Naive thymus-derived CD4-positive, alpha-beta T cell (primary cell): ENCODE measurements at regions of chr2 and their contacts with region 1.

Region 1: GRCh38 chr2:106542811-106543259 is 55.7 kb downstream of the CD8B2 start:
- DNase-seq: peak; percentile 43 to 77 (median 62)
- ATAC-seq: peak; percentile 95
- H3K4me3 ChIP-seq: no peak overlapping the region
- H3K4me3 Mint-ChIP-seq: peak overlapping the region; percentile 48 to 90 (median 80)
- H3K27ac ChIP-seq: no peak overlapping the region
- H3K27ac Mint-ChIP-seq: peak overlapping the region in 2 of 9 donors; percentile 67 to 80
- H3K4me1 ChIP-seq: no peaks in the 10 kb centered on the region
- H3K4me1 Mint-ChIP-seq: peaks cover 0 to 5% (median 4%) of the 10 kb centered on the region in 7 donors
- H3K27me3 ChIP-seq: no peaks in the 10 kb centered on the region
- H3K27me3 Mint-ChIP-seq: peaks cover 16 to 35% (median 19%) of the 10 kb centered on the region in 5 donors

Region 2: DNA sequence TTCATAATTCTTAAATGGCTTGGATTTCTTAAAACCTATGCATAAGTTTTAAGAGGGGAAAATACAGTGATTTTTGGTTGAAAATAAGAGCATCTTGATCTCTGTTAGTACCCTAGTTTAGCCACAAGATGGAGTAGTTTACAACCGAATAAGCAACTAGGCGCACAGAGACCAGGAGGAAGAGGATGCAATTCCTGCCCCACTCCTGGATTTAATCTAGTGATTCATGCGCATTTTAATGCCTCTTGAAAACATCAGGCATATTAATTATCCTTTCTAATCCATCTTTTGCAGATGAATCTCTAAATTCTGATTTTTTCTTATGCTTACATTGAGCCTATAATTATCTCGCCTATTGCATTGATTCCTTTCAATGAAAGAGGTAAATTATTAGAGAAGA is 1428.3 kb before region 1 on chr2:
- CTCF ChIA-PET with region 1: interaction called, 3 read pairs
- POLR2A ChIA-PET with region 1: no interaction called
- intact Hi-C with region 1: loop called in 1 of 2 experiments (anchors 2 kb)
- DNase-seq: peak in 6 of 9 donors; percentile 7 to 29 (median 14)
- ATAC-seq: peak; percentile 51
- H3K4me3 ChIP-seq: no peak overlapping the region
- H3K4me3 Mint-ChIP-seq: no peak overlapping the region
- H3K27ac ChIP-seq: no peak overlapping the region
- H3K27ac Mint-ChIP-seq: no peak overlapping the region
- H3K4me1 ChIP-seq: no peaks in the 10 kb centered on the region
- H3K4me1 Mint-ChIP-seq: peaks cover 0 to 1% (median 0%) of the 10 kb centered on the region in 7 donors
- H3K27me3 ChIP-seq: no peaks in the 10 kb centered on the region
- H3K27me3 Mint-ChIP-seq: no peaks in the 10 kb centered on the region

Region 3: DNA sequence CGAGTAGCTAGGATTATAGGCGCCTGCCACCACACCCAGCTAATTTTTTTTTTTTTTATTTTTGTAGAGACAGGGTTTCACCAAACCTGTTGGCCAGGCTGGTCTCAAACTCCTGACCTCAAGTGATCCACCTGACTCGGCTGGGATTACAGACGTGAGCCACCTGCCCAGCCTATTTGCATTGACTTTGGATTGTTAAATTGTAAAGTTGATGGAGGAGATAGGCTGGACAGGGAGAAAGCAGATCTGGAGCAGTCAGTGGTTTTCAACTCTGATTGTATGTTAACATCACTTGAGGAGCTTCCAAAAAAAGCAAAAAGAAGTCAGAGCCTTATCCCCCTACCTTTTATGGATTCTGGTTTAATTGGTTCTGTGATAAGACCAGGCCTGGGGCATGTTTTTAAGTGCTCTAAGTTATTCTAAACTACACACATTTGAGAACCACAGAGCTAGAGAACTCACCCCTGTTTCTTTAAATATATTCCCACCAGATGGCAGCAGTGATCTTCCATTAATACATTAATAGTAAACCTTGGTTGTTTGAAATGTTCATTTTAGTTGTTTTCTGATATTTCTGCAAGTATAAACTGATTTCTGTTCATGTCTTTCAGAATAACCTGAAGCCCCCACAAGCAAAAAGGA is 1198.0 kb before region 1 on chr2:
- CTCF ChIA-PET with region 1: no interaction called
- POLR2A ChIA-PET with region 1: no interaction called
- intact Hi-C with region 1: loop called in 1 of 2 experiments (anchors 1 kb)
- DNase-seq: peak in 5 of 9 donors; percentile 31 to 49 (median 43)
- ATAC-seq: peak; percentile 65
- H3K4me3 ChIP-seq: no peak overlapping the region
- H3K4me3 Mint-ChIP-seq: no peak overlapping the region
- H3K27ac ChIP-seq: no peak overlapping the region
- H3K27ac Mint-ChIP-seq: peak overlapping the region in 1 of 9 donors; percentile 50
- H3K4me1 ChIP-seq: no peaks in the 10 kb centered on the region
- H3K4me1 Mint-ChIP-seq: peaks cover 4 to 20% (median 9%) of the 10 kb centered on the region in 7 donors
- H3K27me3 ChIP-seq: no peaks in the 10 kb centered on the region
- H3K27me3 Mint-ChIP-seq: no peaks in the 10 kb centered on the region

Region 4: GRCh38 chr2:105431367-105432043 is 1111.3 kb before region 1 on chr2:
- CTCF ChIA-PET with region 1: no interaction called
- POLR2A ChIA-PET with region 1: no interaction called
- intact Hi-C with region 1: no loop called
- DNase-seq: no peak
- ATAC-seq: no peak
- H3K4me3 ChIP-seq: no peak overlapping the region
- H3K4me3 Mint-ChIP-seq: no peak overlapping the region
- H3K27ac ChIP-seq: no peak overlapping the region
- H3K27ac Mint-ChIP-seq: no peak overlapping the region
- H3K4me1 ChIP-seq: peaks cover 8 to 16% of the 10 kb centered on the region in 2 donors
- H3K4me1 Mint-ChIP-seq: peaks cover 11 to 23% (median 16%) of the 10 kb centered on the region in 7 donors
- H3K27me3 ChIP-seq: no peaks in the 10 kb centered on the region
- H3K27me3 Mint-ChIP-seq: peaks cover 0 to 20% (median 4%) of the 10 kb centered on the region in 5 donors

Region 5: GRCh38 chr2:106104332-106105062 is 438.3 kb before region 1 on chr2:
- CTCF ChIA-PET with region 1: interaction called, 8 read pairs
- POLR2A ChIA-PET with region 1: no interaction called
- intact Hi-C with region 1: loop called in 1 of 2 experiments (anchors 1 kb)
- DNase-seq: peak in 8 of 9 donors; percentile 55 to 78 (median 70)
- ATAC-seq: peak; percentile 84
- H3K4me3 ChIP-seq: no peak overlapping the region
- H3K4me3 Mint-ChIP-seq: no peak overlapping the region
- H3K27ac ChIP-seq: no peak overlapping the region
- H3K27ac Mint-ChIP-seq: peak overlapping the region in 7 of 9 donors; percentile 3 to 73 (median 21)
- H3K4me1 ChIP-seq: no peaks in the 10 kb centered on the region
- H3K4me1 Mint-ChIP-seq: peaks cover 0 to 20% (median 13%) of the 10 kb centered on the region in 7 donors
- H3K27me3 ChIP-seq: no peaks in the 10 kb centered on the region
- H3K27me3 Mint-ChIP-seq: no peaks in the 10 kb centered on the region

Region 6: DNA sequence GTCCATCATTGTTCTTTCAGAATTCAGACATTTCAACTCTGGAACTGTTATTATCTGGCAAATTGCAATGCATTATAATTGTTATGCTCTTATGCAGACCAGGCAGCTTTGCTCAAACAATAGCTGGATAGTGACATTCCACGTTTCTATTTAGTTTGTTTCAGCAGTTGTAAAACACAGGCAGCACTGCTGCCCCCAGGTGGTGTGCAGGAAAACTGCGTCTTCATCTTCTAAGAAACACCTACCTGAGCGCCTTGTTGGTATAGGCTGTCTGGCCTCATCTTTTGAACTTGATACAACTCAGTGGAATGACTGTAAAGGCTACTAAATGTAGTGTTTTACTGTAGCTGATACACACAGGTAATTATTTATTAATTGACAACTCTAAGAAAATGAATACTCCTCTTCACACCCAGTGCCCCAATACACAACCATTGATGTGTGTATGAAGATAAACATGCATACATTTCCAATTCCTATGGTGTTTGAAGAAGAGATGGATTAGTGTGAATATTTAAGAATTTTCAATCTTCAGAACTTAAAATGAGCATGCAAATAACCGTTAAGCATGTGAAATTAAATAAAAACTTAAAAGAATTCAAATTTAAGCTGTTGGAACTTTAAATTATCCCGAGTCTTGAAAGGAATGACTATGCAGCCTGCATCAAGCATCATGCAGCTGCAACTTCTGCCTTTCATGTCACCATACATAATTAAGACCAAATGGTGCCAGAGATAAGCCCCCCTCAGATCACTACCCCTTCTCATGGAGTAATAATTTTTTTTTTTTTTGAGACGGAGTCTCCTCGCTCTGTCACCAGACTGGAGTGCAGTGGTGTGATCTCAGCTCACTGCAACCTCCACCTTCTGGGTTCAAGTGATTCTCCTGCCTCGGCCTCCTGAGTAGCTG is 30.0 kb after region 1 on chr2:
- CTCF ChIA-PET with region 1: no interaction called
- POLR2A ChIA-PET with region 1: no interaction called
- intact Hi-C with region 1: no loop called
- DNase-seq: no peak
- ATAC-seq: no peak
- H3K4me3 ChIP-seq: no peak overlapping the region
- H3K4me3 Mint-ChIP-seq: no peak overlapping the region
- H3K27ac ChIP-seq: no peak overlapping the region
- H3K27ac Mint-ChIP-seq: no peak overlapping the region
- H3K4me1 ChIP-seq: no peaks in the 10 kb centered on the region
- H3K4me1 Mint-ChIP-seq: no peaks in the 10 kb centered on the region
- H3K27me3 ChIP-seq: no peaks in the 10 kb centered on the region
- H3K27me3 Mint-ChIP-seq: peaks cover 2 to 8% (median 7%) of the 10 kb centered on the region in 5 donors